ENCODE measurements at regions of chr4 and their contacts with region 1.

Region 1: DNA sequence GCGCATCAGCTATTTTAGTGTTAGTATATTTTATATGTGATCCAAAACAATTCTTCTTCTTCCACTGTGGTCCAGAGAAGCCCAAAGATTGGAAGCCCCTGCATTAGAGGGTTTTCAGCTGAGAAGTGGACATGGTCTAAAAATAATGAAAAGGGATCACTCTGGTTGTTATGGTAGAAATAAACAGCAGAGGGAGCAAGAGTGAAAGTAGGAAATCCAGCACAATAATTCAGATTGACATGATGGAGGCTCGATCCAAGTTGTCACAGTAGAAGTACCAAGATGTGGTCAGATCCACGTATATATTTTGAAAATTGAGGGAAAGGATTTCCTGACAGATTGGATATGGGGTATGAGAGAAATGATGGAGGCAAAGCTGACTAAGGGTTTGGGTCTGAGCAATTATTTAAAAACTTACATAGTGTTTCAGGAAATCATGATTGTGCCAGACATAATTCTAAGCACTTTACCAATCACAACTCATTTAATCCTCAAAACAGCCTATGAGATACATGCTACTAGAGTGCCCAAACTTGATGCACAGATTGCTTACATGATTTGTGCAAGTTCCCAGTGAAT is 17.0 kb upstream of the TMEM144 start:
- H3K4me3 ChIP-seq: no peak overlapping the region
- H3K27ac ChIP-seq: no peak overlapping the region
- H3K4me1 ChIP-seq: no peaks in the 10 kb centered on the region
- CTCF ChIP-seq: no peak

Region 2: GRCh38 chr4:158253350-158253980 is 60.2 kb after region 1 on chr4:
- CTCF ChIA-PET with region 1: interaction called, 52 read pairs
- POLR2A ChIA-PET with region 1: no interaction called
- H3K4me3 ChIP-seq: no peak overlapping the region
- H3K27ac ChIP-seq: no peak overlapping the region
- H3K4me1 ChIP-seq: no peaks in the 10 kb centered on the region
- CTCF ChIP-seq: 0 out of 2 replicates have a peak, but pooled peaks have one; percentile 9

Region 3: DNA sequence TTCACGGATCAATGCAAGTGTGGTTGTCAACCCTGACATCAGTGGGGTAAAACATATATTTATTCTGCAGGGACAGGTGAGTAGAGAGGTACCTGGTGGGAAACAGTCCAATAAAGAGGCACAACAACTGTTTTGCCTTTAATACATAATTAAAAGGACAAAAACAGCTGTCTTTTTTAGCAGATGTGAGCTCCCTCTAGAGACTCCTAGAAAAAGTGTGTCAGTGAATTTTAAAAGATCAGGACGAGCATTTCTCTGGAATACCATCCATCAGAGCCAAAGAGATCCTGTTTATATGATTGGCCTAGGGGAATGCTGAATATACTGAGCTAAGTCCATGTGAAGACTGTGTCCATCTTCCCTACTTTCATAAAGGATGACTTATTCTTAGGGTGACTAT is 75.3 kb after region 1 on chr4:
- CTCF ChIA-PET with region 1: no interaction called
- POLR2A ChIA-PET with region 1: no interaction called
- H3K4me3 ChIP-seq: no peak overlapping the region
- H3K27ac ChIP-seq: no peak overlapping the region
- H3K4me1 ChIP-seq: no peaks in the 10 kb centered on the region
- CTCF ChIP-seq: no peak

Measured in HEK293 (cell line).